ENCODE measurements at regions of chr15 and their contacts with region 1.

Region 1: GRCh38 chr15:78108299-78109084 is 16.1 kb downstream of the SH2D7 start:
- DNase-seq: peak; percentile 83
- ATAC-seq: peak; percentile 97
- H3K4me3 ChIP-seq: no peak overlapping the region
- H3K27ac ChIP-seq: no peak overlapping the region
- H3K4me1 ChIP-seq: peaks cover 2% of the 10 kb centered on the region; the same call in 1 of the 2 replicates
- H3K27me3 ChIP-seq: peaks cover 2% of the 10 kb centered on the region; the same call in 1 of the 2 replicates
- CTCF ChIP-seq: peak; percentile 98
- POLR2A ChIP-seq: peak; percentile 46; the same call in 1 of the 2 replicates
- RAD21 ChIP-seq: peak; percentile 97

Region 2: DNA sequence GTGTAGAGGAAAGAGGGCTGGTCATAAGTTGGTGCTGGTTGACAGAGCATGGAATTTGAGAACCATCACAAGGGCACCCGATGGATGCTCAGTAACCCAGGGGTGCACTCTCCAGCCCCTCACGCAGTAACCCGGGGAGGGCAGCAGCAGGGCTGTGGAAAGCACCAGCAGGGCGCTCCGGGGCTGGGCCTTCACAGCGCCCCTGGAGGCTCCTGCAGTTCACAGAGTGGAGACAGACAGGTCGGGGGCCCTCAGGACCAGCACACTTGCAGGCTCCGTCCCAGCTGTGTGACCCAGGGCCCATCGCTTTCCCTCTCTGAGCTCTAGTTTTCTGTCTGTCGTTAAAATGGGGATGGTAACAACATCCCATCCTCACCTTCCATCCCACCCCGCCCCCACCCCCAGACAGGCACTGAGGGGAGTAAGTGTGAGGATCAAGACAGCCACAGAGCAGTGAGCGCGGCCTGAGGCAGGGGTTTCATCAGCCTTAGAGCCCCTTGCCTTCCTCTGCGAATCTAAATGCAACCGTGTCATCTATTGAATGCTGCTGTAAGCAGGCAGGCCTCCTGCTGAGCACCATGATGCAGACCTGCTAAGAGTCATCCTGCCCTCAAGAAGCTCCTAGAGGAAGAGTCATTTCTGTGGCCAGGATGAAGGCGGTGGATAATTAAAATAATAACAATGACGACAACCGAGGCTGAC is 385.6 kb before region 1 on chr15:
- CTCF ChIA-PET with region 1: no interaction called
- POLR2A ChIA-PET with region 1: no interaction called
- dilution Hi-C with region 1: no loop called
- in situ Hi-C with region 1: no loop called
- intact Hi-C with region 1: no loop called
- DNase-seq: no peak
- ATAC-seq: no peak
- H3K4me3 ChIP-seq: no peak overlapping the region
- H3K27ac ChIP-seq: no peak overlapping the region
- H3K4me1 ChIP-seq: no peaks in the 10 kb centered on the region
- H3K27me3 ChIP-seq: peaks cover 43% of the 10 kb centered on the region
- CTCF ChIP-seq: no peak
- POLR2A ChIP-seq: no peak
- RAD21 ChIP-seq: no peak

Region 3: GRCh38 chr15:77966540-77967290 is 141.8 kb before region 1 on chr15:
- CTCF ChIA-PET with region 1: interaction called, 27 read pairs
- POLR2A ChIA-PET with region 1: no interaction called
- dilution Hi-C with region 1: no loop called
- in situ Hi-C with region 1: loop called (anchors 5 kb)
- intact Hi-C with region 1: loop called (anchors 1 kb)
- DNase-seq: peak; percentile 62
- ATAC-seq: peak; percentile 96
- H3K4me3 ChIP-seq: no peak overlapping the region
- H3K27ac ChIP-seq: no peak overlapping the region
- H3K4me1 ChIP-seq: no peaks in the 10 kb centered on the region
- H3K27me3 ChIP-seq: peaks cover 21% of the 10 kb centered on the region
- CTCF ChIP-seq: peak; percentile 93
- POLR2A ChIP-seq: no peak
- RAD21 ChIP-seq: peak; percentile 90

Region 4: GRCh38 chr15:78093242-78094020 is 15.1 kb before region 1 on chr15:
- CTCF ChIA-PET with region 1: interaction called, 10 read pairs
- POLR2A ChIA-PET with region 1: no interaction called
- dilution Hi-C with region 1: no loop called
- in situ Hi-C with region 1: no loop called
- intact Hi-C with region 1: no loop called
- DNase-seq: peak; percentile 95
- ATAC-seq: peak; percentile 90
- H3K4me3 ChIP-seq: no peak overlapping the region
- H3K27ac ChIP-seq: peak overlapping the region; percentile 19; the same call in 1 of the 2 replicates
- H3K4me1 ChIP-seq: peaks cover 23% of the 10 kb centered on the region
- H3K27me3 ChIP-seq: peaks cover 28% of the 10 kb centered on the region
- CTCF ChIP-seq: no peak
- POLR2A ChIP-seq: no peak
- RAD21 ChIP-seq: no peak; the same call in 1 of the 2 replicates

Region 5: GRCh38 chr15:78234515-78235040 is 126.1 kb after region 1 on chr15 and contains the start of gene ACSBG1:
- CTCF ChIA-PET with region 1: interaction called, 6 read pairs
- POLR2A ChIA-PET with region 1: no interaction called
- dilution Hi-C with region 1: no loop called
- in situ Hi-C with region 1: loop called (anchors 10 kb)
- intact Hi-C with region 1: no loop called
- DNase-seq: no peak
- ATAC-seq: no peak
- H3K4me3 ChIP-seq: no peak within 1 kb of the TSS
- H3K27ac ChIP-seq: no peak within 1 kb of the TSS
- H3K4me1 ChIP-seq: no peaks in the 10 kb centered on the region
- H3K27me3 ChIP-seq: peaks cover 59% of the 10 kb centered on the region
- CTCF ChIP-seq: no peak
- POLR2A ChIP-seq: no peak
- RAD21 ChIP-seq: no peak
- total RNA-seq, gene ACSBG1: not detected in 2 replicates

Region 6: DNA sequence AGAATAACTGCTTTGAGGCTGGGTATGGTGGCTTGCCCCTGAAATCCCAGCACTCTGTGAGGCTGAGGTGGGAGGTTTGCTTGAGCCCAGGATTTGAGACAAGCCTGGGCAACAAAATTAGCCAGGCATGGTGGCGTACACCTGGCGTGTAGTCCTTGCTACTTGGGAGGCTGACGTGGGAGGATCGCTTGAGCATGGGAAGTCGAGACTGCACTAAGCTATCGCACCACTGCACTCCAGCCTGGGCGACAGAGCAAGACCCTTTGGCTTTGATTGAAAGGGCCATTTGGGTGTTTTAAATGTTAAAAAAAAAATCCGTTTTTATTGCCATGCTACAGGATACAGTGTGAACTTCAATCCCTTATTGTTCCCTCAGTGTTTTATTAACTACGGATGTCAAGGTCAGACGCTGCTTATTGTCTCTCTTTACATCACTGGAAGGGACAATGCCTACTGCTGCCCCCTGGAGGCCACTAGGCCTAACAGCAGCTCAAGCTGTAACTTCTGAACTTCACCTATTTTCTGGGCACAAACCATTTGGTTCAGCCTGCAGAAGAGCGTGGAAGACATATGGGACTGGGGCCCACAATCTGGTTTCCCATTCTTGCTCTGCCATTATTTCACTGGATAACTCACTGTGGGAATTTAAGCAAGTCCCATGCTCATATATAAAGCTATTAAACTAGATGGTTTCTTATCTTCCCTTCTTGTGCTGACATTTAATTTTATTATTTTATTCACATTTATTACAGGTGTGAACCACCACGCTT is 314.3 kb after region 1 on chr15:
- CTCF ChIA-PET with region 1: no interaction called
- POLR2A ChIA-PET with region 1: no interaction called
- dilution Hi-C with region 1: no loop called
- in situ Hi-C with region 1: loop called (anchors 10 kb)
- intact Hi-C with region 1: no loop called
- DNase-seq: peak; percentile 45
- ATAC-seq: peak; percentile 98
- H3K4me3 ChIP-seq: no peak overlapping the region
- H3K27ac ChIP-seq: no peak overlapping the region
- H3K4me1 ChIP-seq: no peaks in the 10 kb centered on the region
- H3K27me3 ChIP-seq: peaks cover 20% of the 10 kb centered on the region
- CTCF ChIP-seq: peak; percentile 83
- POLR2A ChIP-seq: no peak
- RAD21 ChIP-seq: peak; percentile 67

Measured in IMR-90 (cell line).